Activated CD4-positive, alpha-beta T cell treated with anti-CD3 and anti-CD28 coated beads for 36 hours (primary cell): ENCODE measurements at regions of chr20 and their contacts with region 1.

Region 1: DNA sequence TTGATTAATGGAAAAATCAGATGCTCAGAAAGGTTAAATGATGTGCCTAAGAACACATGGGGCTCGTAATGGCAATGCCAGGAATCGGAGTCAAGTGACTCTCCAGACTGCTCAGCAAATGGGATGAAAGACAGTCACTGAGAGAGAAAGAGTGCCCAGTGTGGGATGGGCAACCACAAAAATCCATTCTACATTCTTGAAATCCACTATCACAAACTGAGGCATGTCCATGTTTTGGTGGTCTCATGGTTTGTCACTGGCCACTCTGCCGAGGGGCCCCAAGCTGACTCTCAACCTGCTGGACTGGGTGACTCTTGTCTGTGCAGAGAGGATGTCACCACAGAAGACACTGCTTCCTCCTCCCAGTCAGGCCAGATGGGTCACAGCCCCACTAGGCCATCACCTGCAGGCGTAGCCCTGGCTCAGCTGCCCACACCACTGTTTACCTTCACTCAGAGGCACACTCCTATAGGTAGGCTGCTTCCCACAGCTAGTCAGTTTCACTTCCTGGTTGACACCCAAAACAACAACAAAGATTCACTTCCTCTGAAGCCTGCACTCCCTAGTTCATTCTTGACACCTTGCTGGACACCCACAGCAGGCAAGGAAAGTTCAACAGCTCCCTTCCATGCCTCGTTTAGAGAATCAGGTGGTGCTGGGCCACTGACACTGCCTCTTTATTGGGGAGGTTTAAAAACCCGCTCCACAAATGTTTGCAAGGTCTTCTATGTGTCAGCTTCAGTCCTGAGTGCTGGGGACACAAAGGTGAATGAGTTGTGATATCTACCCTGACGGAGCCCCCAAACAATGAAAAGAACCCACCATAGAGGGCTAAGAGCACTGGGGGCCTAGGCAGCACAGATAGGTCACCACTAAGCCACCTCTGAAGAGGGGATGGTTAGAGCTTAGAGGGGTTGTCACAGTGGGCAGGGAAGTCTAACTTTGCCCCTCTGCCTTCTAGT is 21.7 kb downstream of the MAP1LC3A start:
- DNase-seq: peak; percentile 29
- ATAC-seq: peak; percentile 20
- H3K4me3 Mint-ChIP-seq: no peak overlapping the region
- H3K27ac Mint-ChIP-seq: peak overlapping the region; percentile 91
- H3K4me1 Mint-ChIP-seq: peaks cover 30% of the 10 kb centered on the region
- H3K27me3 Mint-ChIP-seq: no peaks in the 10 kb centered on the region

Region 2: GRCh38 chr20:34558320-34559218 is 21.7 kb before region 1 on chr20 and contains the start of gene MAP1LC3A:
- CTCF ChIA-PET with region 1: interaction called, 5 read pairs
- POLR2A ChIA-PET with region 1: no interaction called
- intact Hi-C with region 1: loop called in 1 of 2 experiments (anchors 2 kb)
- DNase-seq: peak; percentile 96
- ATAC-seq: peak; percentile 87
- H3K4me3 Mint-ChIP-seq: peak within 1 kb of the TSS; percentile 79
- H3K27ac Mint-ChIP-seq: peak within 1 kb of the TSS; percentile 88
- H3K4me1 Mint-ChIP-seq: peaks cover 14% of the 10 kb centered on the region
- H3K27me3 Mint-ChIP-seq: no peaks in the 10 kb centered on the region
- total RNA-seq, gene MAP1LC3A: 2.5 to 2.7 TPM